ENCODE measurements at regions of chr13 and their contacts with region 1.

Region 1: DNA sequence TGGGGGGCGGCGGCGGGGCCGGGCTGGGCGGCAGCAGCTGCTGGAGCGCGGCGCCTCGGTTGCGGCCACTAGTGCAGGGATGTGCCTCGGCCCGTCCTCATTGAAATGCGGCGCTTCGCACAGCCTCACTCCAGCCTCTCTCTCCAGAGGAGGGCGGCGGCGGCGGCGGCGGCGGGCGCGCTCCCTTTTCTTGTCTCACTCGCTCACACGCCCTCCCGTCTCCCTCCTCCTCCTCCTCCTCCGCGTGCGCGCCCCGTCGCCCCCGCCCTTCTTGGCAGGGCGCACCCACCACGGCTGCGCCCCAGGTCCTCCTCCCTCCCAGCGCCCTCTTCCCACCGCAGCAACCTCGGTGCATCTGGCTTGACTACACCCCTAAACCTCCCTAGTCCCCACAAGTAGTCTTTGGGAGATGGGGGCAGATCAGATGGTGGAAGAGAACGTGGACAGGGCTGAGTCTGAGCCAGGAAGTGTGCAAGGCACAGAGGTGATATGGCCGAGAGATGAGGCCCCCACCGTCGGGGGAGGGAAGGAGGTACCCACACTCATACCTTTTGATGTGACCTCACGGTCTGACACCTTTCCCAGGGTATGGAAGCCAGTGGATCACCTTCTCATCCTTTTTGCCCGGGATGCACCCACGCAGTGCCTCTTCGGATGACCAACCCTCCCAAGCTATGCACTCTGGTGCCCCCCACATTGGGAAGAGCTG is at the start of gene DCLK1:
- DNase-seq: peak; percentile 89
- ATAC-seq: peak; percentile 89
- total RNA-seq, gene DCLK1: 19.3 TPM

Region 2: DNA sequence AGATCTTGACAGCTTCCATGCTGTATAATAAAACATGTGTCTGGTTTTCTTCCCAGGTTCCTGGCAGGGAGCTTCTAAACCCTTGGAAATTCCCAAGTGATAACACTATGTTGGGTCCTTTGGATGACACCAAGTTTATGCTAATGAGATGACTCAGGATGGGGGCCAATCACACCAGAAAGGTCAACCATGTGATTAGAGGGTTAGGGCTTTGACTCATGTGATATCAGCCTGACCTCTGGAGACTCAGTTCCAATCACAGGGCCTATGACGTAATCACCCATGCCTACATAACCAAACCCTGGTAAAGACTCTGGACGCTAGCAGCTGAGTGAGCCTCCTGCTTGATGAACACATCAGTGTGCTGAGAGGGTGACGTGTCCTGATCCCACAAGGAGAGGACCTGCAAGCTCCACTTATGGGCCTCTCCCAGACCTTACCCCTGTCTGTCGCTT is 203.8 kb before region 1 on chr13:
- intact Hi-C with region 1: no loop called
- DNase-seq: no peak
- ATAC-seq: peak; percentile 58

Region 3: GRCh38 chr13:35984776-35985453 is 146.5 kb before region 1 on chr13:
- intact Hi-C with region 1: loop called (anchors 5 kb)
- DNase-seq: no peak
- ATAC-seq: no peak

Region 4: DNA sequence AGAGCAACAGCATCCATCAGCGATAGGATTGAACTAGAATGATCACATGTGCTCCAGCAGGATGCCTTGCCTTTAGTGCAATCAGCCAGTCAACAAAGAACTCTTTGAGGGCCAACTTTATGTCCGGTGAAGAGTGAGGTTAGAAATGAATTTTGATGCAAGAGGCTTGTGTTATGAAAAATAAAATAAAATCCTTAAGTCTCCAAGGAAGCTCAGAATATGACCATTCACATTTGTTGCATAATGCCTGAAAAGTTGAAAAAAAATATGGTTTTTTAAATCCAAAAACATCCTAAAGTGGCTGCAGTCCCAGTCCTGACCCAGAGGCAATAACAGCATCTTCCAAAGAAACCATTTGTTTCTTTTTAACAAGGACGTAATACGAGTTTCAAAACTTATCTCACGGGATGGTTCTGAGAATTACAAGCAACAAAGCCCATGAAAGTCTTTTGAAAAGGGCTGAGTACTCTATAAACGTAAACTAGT is 61.5 kb before region 1 on chr13:
- intact Hi-C with region 1: loop called (anchors 2 kb)
- DNase-seq: no peak
- ATAC-seq: peak; percentile 84

Region 5: GRCh38 chr13:36275190-36276002 is 144.0 kb after region 1 on chr13:
- intact Hi-C with region 1: loop called (anchors 10 kb)
- DNase-seq: no peak
- ATAC-seq: peak; percentile 52